Lower leg skin (tissue), 4 donors: ENCODE measurements at regions of chr16 and their contacts with region 1.

Region 1: GRCh38 chr16:78866521-78866920 is 734.0 kb downstream of the MAF start:
- DNase-seq: no peak
- H3K4me3 ChIP-seq: no peak overlapping the region
- CTCF ChIP-seq: no peak
- POLR2A ChIP-seq: no peak

Region 2: GRCh38 chr16:78851266-78851665 is 15.3 kb before region 1 on chr16:
- intact Hi-C with region 1: loop called (anchors 1 kb)
- DNase-seq: no peak
- H3K4me3 ChIP-seq: no peak overlapping the region
- CTCF ChIP-seq: no peak
- POLR2A ChIP-seq: no peak